ENCODE measurements at regions of chr6 and their contacts with region 1.

Region 1: GRCh38 chr6:17865798-17866725 is 121.4 kb downstream of the KIF13A start:
- DNase-seq: peak; percentile 98
- H3K4me3 Mint-ChIP-seq: peak overlapping the region; percentile 33
- H3K27ac Mint-ChIP-seq: peak overlapping the region; percentile 94
- H3K4me1 Mint-ChIP-seq: peaks cover 53% of the 10 kb centered on the region
- H3K27me3 Mint-ChIP-seq: no peaks in the 10 kb centered on the region
- CTCF ChIP-seq: no peak

Region 2: GRCh38 chr6:17877196-17877889 is 11.3 kb after region 1 on chr6:
- CTCF ChIA-PET with region 1: no interaction called
- POLR2A ChIA-PET with region 1: interaction called, 21 read pairs
- intact Hi-C with region 1: no loop called
- DNase-seq: peak; percentile 89
- H3K4me3 Mint-ChIP-seq: peak overlapping the region; percentile 34
- H3K27ac Mint-ChIP-seq: peak overlapping the region; percentile 81
- H3K4me1 Mint-ChIP-seq: peaks cover 17% of the 10 kb centered on the region
- H3K27me3 Mint-ChIP-seq: no peaks in the 10 kb centered on the region
- CTCF ChIP-seq: no peak

Region 3: DNA sequence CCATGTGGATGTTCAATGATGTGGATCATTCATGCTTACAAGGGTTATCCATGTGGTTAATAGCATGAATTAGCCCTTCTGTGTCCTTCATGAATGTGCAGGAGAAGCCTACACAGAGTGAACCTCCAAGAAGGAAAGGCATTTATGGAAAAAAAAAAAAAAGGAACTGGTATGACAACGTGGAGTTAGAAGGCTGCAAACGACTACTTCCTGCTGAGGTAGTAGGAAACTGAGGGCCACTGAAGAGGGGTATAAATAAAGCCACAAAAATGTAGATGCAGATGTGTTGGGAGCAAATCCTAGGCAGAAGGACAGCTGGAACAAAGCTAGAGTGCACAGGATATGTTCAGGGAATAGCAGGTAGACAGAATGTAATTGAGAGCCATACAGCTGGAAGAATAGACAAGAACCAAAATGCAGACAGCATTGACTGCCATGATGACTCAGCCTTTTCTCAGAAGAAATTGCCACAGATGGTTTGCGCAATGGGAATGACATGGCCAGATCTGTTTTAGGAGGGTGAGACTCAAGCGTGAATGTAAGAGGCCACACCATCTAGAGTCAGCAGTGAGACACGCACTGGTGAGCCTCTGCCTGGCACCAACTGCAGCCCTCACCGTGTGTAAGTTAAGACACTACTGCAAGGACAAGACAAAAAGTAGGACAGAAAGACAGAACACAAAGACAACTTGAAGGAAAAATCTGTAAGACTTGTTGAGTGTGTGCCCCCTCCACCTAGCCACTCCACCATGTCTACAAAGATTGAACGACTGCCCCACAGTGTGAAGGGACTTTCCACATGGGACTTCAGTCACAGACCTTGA is 41.6 kb after region 1 on chr6:
- CTCF ChIA-PET with region 1: interaction called, 7 read pairs
- POLR2A ChIA-PET with region 1: interaction called, 48 read pairs
- intact Hi-C with region 1: loop called (anchors 1 kb)
- DNase-seq: peak; percentile 99
- H3K4me3 Mint-ChIP-seq: peak overlapping the region; percentile 42
- H3K27ac Mint-ChIP-seq: peak overlapping the region; percentile 92
- H3K4me1 Mint-ChIP-seq: peaks cover 42% of the 10 kb centered on the region
- H3K27me3 Mint-ChIP-seq: no peaks in the 10 kb centered on the region
- CTCF ChIP-seq: peak; percentile 28

Region 4: GRCh38 chr6:17987576-17988421 is 121.7 kb after region 1 on chr6 and contains the start of gene KIF13A:
- CTCF ChIA-PET with region 1: interaction called, 4 read pairs
- POLR2A ChIA-PET with region 1: interaction called, 83 read pairs
- intact Hi-C with region 1: no loop called
- DNase-seq: peak; percentile 46
- H3K4me3 Mint-ChIP-seq: peak within 1 kb of the TSS; percentile 83
- H3K27ac Mint-ChIP-seq: peak within 1 kb of the TSS; percentile 88
- H3K4me1 Mint-ChIP-seq: peaks cover 32% of the 10 kb centered on the region
- H3K27me3 Mint-ChIP-seq: no peaks in the 10 kb centered on the region
- CTCF ChIP-seq: no peak
- total RNA-seq, gene KIF13A: 24.1 and 33.5 TPM in 2 replicates

Measured in MCF 10A (cell line).